Activated CD8-positive, alpha-beta T cell treated with anti-CD3 and anti-CD28 coated beads, Interleukin-2, amount 10 ng/mL, durations not matched to agents 7 days and 5 days (primary cell): ENCODE measurements at regions of chr7 and their contacts with region 1.

Region 1: GRCh38 chr7:100691676-100692577 is 2.1 kb downstream of the GIGYF1 start:
- DNase-seq: peak; percentile 88
- ATAC-seq: peak; percentile 78
- H3K4me3 Mint-ChIP-seq: peak overlapping the region; percentile 94
- H3K27ac Mint-ChIP-seq: peak overlapping the region; percentile 65
- H3K4me1 Mint-ChIP-seq: peaks cover 37% of the 10 kb centered on the region
- H3K27me3 Mint-ChIP-seq: peaks cover 9% of the 10 kb centered on the region

Region 2: GRCh38 chr7:100586266-100587025 is 105.5 kb before region 1 on chr7 and contains the start of gene FBXO24:
- CTCF ChIA-PET with region 1: interaction called, 27 read pairs
- POLR2A ChIA-PET with region 1: interaction called, 5 read pairs
- DNase-seq: peak; percentile 100
- ATAC-seq: peak; percentile 87
- H3K4me3 Mint-ChIP-seq: peak within 1 kb of the TSS; percentile 93
- H3K27ac Mint-ChIP-seq: peak within 1 kb of the TSS; percentile 98
- H3K4me1 Mint-ChIP-seq: peaks cover 26% of the 10 kb centered on the region
- H3K27me3 Mint-ChIP-seq: peaks cover 10% of the 10 kb centered on the region
- total RNA-seq, gene FBXO24: 0.37 to 0.45 TPM

Region 3: GRCh38 chr7:100611974-100612729 is 79.8 kb before region 1 on chr7 and contains the start of gene MOSPD3:
- CTCF ChIA-PET with region 1: interaction called, 18 read pairs
- POLR2A ChIA-PET with region 1: interaction called, 3 read pairs
- DNase-seq: peak; percentile 98
- ATAC-seq: peak; percentile 94
- H3K4me3 Mint-ChIP-seq: peak within 1 kb of the TSS; percentile 95
- H3K27ac Mint-ChIP-seq: peak within 1 kb of the TSS; percentile 99
- H3K4me1 Mint-ChIP-seq: peaks cover 30% of the 10 kb centered on the region
- H3K27me3 Mint-ChIP-seq: peaks cover 6% of the 10 kb centered on the region
- total RNA-seq, gene MOSPD3: 42.1 to 43.5 TPM

Region 4: DNA sequence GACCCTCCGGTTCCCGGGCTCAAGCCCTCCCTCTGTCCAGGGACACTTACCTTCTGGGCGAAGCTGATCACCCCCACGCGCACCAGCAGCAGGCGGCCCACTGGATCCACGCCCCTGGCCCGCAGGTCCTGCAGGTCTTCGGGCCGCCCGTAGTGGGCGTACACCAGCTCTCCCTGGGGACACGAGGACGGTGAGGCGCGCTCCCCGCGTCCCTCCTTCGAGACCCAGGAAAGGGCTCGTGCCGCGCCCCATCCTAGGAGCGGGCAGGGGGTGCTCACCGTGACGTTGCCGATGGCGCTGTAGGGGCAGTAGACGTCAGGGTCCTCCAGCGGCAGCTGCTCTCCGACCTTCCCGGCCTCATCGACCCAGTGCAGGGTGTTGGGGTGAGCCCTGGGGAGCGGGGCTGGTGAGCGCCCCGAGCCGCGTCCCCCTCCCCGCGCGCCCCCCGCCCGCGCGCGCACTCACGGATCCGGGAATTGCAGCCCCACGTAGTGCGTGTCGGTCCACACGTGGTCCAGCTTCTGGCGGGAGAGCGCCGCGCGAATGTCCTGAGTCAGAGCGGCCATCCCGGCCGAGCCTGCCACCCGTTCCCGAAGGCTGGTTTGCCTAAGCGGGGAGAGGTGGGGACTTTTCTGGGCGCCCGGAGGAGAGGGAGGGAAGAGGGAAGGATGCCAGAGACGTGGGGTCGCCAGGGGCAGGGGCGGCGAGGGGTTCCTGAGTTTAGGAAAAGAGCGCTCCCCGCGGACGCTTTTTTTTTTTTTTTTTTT is 58.8 kb before region 1 on chr7:
- CTCF ChIA-PET with region 1: interaction called, 28 read pairs
- POLR2A ChIA-PET with region 1: no interaction called
- DNase-seq: peak; percentile 68
- ATAC-seq: peak; percentile 69
- H3K4me3 Mint-ChIP-seq: peak overlapping the region; percentile 83
- H3K27ac Mint-ChIP-seq: peak overlapping the region; percentile 88
- H3K4me1 Mint-ChIP-seq: peaks cover 46% of the 10 kb centered on the region
- H3K27me3 Mint-ChIP-seq: peaks cover 5% of the 10 kb centered on the region

Region 5: GRCh38 chr7:100680167-100680575 is 11.8 kb before region 1 on chr7:
- CTCF ChIA-PET with region 1: interaction called, 38 read pairs
- POLR2A ChIA-PET with region 1: interaction called, 9 read pairs
- DNase-seq: no peak
- ATAC-seq: no peak
- H3K4me3 Mint-ChIP-seq: no peak overlapping the region
- H3K27ac Mint-ChIP-seq: peak overlapping the region; percentile 1
- H3K4me1 Mint-ChIP-seq: peaks cover 34% of the 10 kb centered on the region
- H3K27me3 Mint-ChIP-seq: no peaks in the 10 kb centered on the region